BJ (cell line): ENCODE measurements at regions of chr5 and their contacts with region 1.

Region 1: GRCh38 chr5:38905516-38905915 is 59.7 kb downstream of the OSMR start:
- DNase-seq: no peak
- H3K4me3 ChIP-seq: no peak overlapping the region
- H3K27me3 ChIP-seq: no peaks in the 10 kb centered on the region
- CTCF ChIP-seq: no peak

Region 2: GRCh38 chr5:38892363-38892762 is 13.2 kb before region 1 on chr5:
- CTCF ChIA-PET with region 1: interaction called, 10 read pairs
- POLR2A ChIA-PET with region 1: no interaction called
- DNase-seq: no peak
- H3K4me3 ChIP-seq: no peak overlapping the region
- H3K27me3 ChIP-seq: no peaks in the 10 kb centered on the region
- CTCF ChIP-seq: no peak